Activated naive CD8-positive, alpha-beta T cell treated with anti-CD3 and anti-CD28 coated beads, Interleukin-2, amount 10 ng/mL, durations not matched to agents 7 days and 5 days (primary cell): ENCODE measurements at regions of chr20 and their contacts with region 1.

Region 1: DNA sequence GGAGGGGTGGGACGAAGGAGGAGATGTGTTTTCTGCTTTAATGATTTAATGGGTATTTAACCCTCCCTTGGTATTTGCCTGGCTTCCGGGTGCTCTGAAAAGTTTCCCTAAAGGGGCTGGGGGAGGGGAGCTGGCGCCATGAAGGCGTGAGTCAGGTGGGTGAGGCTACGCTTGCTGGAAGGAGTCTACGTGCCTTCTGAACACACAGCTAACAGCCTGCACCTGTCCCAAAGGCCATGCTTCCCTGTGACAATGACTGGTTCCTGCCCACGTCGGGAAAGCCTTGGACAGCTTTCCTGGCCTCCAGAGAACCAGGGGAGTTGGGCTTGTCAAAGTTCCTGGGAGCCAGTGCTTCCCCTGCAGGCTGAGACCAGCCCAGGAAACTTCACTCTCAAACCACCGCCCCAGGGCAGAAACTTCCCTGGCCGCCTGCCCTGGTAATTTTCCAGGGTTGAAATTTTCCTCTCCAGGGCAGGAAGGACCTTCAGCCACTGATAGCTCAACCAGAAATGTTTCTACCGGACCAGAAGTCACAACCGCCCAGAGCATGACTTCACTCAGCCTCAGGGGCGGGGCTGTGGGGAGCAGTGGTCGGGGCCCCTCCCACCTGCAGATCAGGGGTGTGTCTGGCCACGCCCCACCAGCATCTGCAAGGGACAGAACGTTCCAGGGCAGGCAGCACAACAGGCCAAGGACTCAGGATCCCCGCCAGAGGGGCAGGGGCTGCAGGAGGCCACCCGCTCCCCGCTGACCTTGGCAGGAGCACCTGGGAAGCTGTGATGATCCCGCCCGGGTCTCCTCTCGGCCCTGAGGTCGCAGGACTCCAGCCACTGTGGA is 18.6 kb upstream of the SLCO4A1 start:
- DNase-seq: peak; percentile 92
- ATAC-seq: peak; percentile 83
- H3K4me3 Mint-ChIP-seq: peak overlapping the region; percentile 86
- H3K27ac Mint-ChIP-seq: peak overlapping the region; percentile 98
- H3K4me1 Mint-ChIP-seq: peaks cover 28% of the 10 kb centered on the region
- H3K27me3 Mint-ChIP-seq: no peaks in the 10 kb centered on the region

Region 2: GRCh38 chr20:62603021-62603906 is 20.4 kb before region 1 on chr20:
- POLR2A ChIA-PET with region 1: interaction called, 38 read pairs
- DNase-seq: peak; percentile 76
- ATAC-seq: peak; percentile 79
- H3K4me3 Mint-ChIP-seq: peak overlapping the region; percentile 86
- H3K27ac Mint-ChIP-seq: peak overlapping the region; percentile 95
- H3K4me1 Mint-ChIP-seq: peaks cover 15% of the 10 kb centered on the region
- H3K27me3 Mint-ChIP-seq: peaks cover 34% of the 10 kb centered on the region

Region 3: GRCh38 chr20:62636446-62636845 is 12.7 kb after region 1 on chr20:
- POLR2A ChIA-PET with region 1: interaction called, 61 read pairs
- DNase-seq: no peak
- ATAC-seq: peak; percentile 81
- H3K4me3 Mint-ChIP-seq: peak overlapping the region; percentile 10
- H3K27ac Mint-ChIP-seq: peak overlapping the region; percentile 67
- H3K4me1 Mint-ChIP-seq: peaks cover 18% of the 10 kb centered on the region
- H3K27me3 Mint-ChIP-seq: peaks cover 24% of the 10 kb centered on the region

Region 4: DNA sequence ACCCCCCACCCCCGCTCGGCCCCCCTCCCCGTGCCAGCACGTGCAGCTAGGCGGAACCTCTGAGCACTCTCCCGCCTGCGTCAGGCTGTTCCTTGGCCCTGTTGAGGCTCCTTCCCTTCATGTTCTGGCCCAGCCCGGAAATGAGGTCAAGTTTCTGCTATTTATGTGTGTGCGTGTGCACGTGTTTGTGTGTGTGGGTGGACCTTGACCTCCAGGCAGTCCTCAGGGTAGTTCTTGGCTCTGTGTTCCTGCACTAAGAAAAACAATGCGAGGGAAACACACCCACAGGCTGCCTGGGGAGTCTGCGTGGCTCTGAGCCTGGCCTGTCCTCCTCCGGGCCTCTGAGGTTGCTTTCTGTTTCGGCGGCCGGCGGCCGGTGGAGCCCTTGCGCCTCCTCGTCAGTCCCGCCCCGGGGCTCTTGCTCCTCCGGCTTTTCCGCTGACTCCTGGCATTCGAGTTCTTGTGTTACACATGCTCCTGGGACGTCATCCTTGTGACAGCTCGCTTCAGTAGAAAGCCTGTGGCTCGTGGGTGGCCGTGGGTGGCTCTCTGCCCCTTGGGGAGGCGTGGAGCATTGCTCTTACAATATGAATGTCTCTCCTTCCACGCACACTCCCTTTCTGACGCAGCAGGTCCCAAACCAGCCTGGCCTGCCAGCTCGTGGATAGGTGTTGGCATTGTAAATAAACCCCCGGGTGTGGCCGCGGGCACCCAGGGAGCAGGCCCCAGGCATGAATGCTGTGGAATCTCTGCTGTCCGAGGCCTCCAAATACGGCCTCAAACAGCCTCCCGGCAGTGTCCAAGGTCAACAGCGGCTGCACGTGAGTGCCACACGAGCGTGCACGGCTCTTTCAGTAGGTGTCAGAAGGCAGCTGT is 28.6 kb after region 1 on chr20:
- POLR2A ChIA-PET with region 1: interaction called, 22 read pairs
- DNase-seq: peak; percentile 74
- ATAC-seq: peak; percentile 65
- H3K4me3 Mint-ChIP-seq: peak overlapping the region; percentile 84
- H3K27ac Mint-ChIP-seq: peak overlapping the region; percentile 98
- H3K4me1 Mint-ChIP-seq: peaks cover 42% of the 10 kb centered on the region
- H3K27me3 Mint-ChIP-seq: no peaks in the 10 kb centered on the region